ENCODE measurements at regions of chr22 and their contacts with region 1.

Region 1: DNA sequence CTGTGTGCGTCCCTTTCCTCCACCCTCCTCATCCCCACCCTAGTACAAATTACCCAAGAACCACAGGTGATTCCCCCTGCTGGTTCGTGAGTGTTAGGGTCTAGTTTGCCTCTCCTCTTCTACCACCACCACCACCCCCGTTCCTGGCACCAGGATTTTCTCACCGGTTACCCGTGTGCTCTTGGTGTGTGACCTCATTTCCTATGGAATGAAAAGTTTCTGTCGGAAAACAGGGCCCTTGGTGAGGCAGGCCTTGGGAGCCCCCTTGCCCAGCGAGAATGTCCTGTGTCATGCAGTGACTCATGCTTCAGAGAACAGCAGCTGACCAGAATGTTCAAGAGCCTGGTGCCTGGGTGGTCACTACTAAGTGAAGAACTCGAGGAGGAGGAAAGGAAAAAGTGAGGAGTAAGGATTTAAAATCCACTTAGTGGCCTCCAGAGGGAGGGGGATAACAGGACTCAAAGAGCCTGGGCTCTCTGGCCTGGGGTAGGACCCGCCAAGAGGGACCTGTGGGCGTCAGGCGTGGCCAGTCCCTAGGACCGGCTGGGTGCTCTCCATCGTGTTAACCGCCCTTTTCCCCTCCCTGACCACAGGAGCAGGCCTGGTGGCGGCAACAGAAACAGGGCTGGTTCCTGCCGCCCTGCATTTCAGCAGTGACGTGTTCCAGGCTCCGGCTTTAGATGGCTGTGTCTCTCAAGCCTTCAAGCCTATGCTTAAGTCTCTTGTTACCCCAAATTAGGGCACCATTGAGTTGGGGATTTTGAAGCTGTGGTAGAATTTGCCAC is 30.2 kb downstream of the C22orf31 start:
- DNase-seq: peak in 1 of 2 donors; percentile 59
- H3K4me3 ChIP-seq: no peak overlapping the region
- CTCF ChIP-seq: no peak
- POLR2A ChIP-seq: no peak

Region 2: DNA sequence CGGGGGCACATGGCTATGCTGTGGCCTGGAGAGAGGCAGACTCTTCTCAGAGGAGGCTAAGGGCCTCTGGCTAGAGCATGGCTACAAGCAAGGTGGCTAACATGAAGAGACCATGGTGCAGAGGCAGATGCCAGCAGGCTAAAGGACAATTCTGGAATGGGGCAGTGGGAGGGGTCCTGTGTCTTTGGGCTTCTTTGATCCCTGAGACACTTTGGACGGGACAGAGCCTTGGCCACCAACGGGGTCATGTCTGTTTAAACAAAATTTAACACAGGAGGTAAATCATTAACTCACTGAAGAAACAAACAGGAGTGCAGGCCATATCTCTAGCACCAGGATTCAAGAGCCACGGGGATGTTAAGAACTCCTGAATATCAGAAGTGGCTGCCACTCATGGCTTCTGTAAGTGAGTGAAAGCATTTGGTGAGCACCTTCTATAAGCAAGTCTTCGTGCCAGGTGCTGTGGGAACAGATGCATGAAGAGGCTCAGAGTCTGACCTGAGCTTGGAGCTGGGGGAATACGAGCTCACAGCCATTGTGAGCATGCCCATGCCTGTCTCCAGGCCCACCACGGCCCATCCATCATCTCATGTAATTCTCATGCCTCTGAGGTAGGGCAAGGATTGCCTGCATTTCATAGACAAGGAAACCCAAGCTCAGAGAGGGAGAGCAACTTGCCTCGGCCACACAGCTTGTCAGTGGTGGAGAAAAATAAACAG is 166.4 kb before region 1 on chr22:
- intact Hi-C with region 1: loop called (anchors 5 kb)
- DNase-seq: no peak
- H3K4me3 ChIP-seq: no peak overlapping the region
- CTCF ChIP-seq: no peak
- POLR2A ChIP-seq: no peak

Region 3: DNA sequence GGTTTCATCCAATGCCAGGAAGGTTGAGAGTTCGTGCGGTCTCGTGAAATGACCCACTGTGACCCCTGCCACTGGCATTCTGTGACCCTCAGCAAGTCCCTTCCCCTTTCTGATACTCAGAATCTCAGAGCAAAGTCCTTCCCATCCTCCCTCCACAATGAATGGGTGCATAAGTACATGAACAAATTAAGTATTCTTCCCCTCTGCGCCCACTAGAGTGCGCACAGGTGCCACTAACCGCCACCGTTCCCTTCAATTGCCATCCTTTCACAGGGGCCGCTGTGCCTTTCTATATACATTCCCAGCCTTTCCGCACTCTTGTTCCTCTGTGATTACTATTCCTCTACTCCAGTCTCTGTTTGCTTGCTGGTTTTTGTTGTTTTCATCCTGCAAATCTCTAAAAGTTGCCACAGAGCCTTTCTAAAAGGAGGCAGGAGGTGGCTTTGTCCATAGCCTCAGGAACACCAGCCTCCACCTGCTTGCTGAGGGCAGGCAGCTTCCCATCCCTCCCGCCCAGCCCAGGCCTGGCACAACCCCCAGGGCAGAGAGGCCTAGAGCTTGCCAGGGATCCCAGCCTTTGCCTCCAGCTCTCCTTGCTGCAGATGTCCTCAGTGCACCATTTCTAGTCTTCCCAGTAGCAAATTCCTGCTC is 363.6 kb after region 1 on chr22:
- intact Hi-C with region 1: no loop called
- DNase-seq: peak; percentile 65 to 83
- H3K4me3 ChIP-seq: no peak overlapping the region
- CTCF ChIP-seq: peak in 1 of 3 donors; percentile 44
- POLR2A ChIP-seq: no peak

Measured in lower leg skin (tissue), 4 donors.